ENCODE measurements at regions of chr17 and their contacts with region 1.

Region 1: GRCh38 chr17:76152591-76152990 is 11.5 kb upstream of the FOXJ1 start:
- DNase-seq: no peak
- ATAC-seq: no peak
- H3K4me3 ChIP-seq: no peak overlapping the region
- H3K27ac ChIP-seq: no peak overlapping the region
- H3K4me1 ChIP-seq: no peaks in the 10 kb centered on the region
- H3K27me3 ChIP-seq: no peaks in the 10 kb centered on the region
- CTCF ChIP-seq: no peak

Region 2: DNA sequence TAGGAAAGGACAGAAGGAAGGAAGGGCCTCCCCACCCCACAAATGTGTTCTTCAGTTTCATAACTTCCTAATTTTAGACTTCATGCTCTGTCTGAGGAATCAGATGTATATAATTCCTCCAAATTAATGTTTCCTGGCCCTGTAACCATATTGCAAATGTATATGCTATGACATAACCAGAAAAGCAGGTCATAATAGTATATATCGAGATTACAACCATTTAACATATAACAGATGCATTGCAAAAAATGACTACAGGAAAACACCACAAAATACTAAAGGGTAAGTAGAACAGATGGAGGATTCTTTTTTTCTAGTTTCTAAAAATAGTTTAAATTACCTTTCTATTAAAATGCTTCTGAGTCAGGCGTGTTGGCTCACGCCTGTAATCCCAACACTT is 45.9 kb before region 1 on chr17:
- CTCF ChIA-PET with region 1: interaction called, 10 read pairs
- POLR2A ChIA-PET with region 1: interaction called, 3 read pairs
- in situ Hi-C with region 1: no loop called
- intact Hi-C with region 1: no loop called
- DNase-seq: no peak
- ATAC-seq: no peak
- H3K4me3 ChIP-seq: no peak overlapping the region
- H3K27ac ChIP-seq: no peak overlapping the region
- H3K4me1 ChIP-seq: peaks cover 14% of the 10 kb centered on the region
- H3K27me3 ChIP-seq: no peaks in the 10 kb centered on the region
- CTCF ChIP-seq: no peak

Region 3: DNA sequence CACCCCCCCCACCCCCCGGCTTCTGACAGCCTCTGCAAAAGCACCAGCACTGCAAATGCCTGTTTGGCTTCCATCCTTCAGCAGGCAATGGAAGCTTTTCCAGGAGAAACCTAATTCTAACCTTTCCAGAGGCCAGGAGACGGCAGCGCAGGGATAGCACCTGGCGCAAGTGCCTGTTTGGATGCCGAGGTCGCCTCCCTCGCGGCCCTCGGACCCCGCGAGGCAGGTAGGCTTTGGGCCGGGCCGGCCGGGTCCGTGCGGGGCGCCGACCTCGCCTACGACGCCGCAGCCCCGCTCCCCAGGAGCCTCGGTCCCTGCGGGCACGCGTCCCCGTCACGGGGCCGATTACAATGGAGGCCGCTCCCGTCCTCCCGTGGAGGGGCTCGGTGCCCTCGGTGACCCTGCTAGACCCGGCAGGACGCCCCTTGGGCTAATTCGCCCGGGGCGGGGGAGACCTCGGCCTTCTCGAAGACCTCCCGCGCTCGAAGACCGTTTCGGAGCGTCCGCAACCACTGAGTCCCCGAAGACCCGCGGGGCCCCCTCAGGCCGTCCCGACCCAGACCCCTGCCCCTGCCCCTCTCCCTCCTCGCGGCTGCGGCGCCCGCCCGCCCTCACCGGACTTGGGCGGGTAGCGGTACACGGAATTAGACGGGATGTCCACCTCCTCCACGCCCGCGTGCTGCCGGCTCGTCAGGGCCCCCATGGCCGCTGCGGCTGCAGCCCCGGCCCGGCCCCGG is 87.1 kb after region 1 on chr17:
- CTCF ChIA-PET with region 1: no interaction called
- POLR2A ChIA-PET with region 1: no interaction called
- in situ Hi-C with region 1: no loop called
- intact Hi-C with region 1: no loop called
- DNase-seq: no peak
- ATAC-seq: peak; percentile 42
- H3K4me3 ChIP-seq: peak overlapping the region; percentile 43 to 63
- H3K27ac ChIP-seq: no peak overlapping the region
- H3K4me1 ChIP-seq: peaks cover 4% of the 10 kb centered on the region; the same call in 1 of the 2 replicates
- H3K27me3 ChIP-seq: peaks cover 14% of the 10 kb centered on the region
- CTCF ChIP-seq: no peak

Measured in Panc1 (cell line).